ENCODE measurements at regions of chr2 and their contacts with region 1.

Region 1: DNA sequence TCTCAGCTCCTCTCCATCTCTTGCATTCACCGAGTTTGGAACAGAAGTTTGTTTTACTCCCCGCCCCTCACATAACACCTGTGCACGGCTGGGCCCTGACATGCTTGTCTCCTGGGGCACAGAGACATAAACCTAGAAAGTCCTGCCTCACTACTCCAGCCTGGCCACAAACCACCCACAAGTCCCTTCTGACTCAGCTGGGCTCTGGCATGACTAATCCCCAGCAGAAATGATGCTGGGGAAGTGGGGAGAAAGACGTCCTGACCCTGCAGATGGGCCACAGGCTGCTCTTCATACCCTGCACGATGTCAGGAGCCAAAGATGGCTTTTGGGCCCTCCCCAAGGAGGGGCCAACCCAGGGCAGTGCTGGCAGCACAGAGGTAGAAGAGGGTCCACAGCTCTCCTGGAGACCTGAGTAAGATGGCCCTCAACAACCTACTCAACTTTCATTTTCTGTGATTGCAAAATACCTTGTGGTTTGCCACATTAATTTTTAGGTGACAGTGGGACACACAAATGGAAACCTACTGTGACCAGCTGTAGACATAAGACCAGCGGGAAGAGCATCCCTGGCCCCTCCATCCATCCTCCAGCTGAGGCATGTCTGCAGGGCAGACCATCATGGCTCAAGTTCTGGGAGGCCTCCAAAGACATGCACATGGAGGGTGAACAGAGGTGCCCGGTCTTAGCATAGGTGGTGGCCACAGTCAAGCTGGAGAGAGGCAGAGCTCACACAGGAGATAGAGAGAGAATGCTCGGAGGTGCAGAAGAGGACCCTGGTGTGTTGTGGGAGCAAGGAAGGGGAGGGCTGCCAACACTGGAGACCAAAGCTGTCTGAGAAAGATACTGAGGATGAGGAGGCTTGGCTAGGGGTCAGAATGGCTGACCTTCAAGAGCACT is 40.0 kb downstream of the DNMT3A start:
- DNase-seq: no peak
- ATAC-seq: peak; percentile 37 to 50; a peak in 3 of 6 replicates
- H3K4me3 ChIP-seq: no peak overlapping the region
- H3K27ac ChIP-seq: no peak overlapping the region
- H3K4me1 ChIP-seq: no peaks in the 10 kb centered on the region; the same call in 2 of the 3 replicates
- CTCF ChIP-seq: no peak
- EP300 ChIP-seq: no peak
- POLR2A ChIP-seq: no peak
- RAD21 ChIP-seq: no peak

Region 2: DNA sequence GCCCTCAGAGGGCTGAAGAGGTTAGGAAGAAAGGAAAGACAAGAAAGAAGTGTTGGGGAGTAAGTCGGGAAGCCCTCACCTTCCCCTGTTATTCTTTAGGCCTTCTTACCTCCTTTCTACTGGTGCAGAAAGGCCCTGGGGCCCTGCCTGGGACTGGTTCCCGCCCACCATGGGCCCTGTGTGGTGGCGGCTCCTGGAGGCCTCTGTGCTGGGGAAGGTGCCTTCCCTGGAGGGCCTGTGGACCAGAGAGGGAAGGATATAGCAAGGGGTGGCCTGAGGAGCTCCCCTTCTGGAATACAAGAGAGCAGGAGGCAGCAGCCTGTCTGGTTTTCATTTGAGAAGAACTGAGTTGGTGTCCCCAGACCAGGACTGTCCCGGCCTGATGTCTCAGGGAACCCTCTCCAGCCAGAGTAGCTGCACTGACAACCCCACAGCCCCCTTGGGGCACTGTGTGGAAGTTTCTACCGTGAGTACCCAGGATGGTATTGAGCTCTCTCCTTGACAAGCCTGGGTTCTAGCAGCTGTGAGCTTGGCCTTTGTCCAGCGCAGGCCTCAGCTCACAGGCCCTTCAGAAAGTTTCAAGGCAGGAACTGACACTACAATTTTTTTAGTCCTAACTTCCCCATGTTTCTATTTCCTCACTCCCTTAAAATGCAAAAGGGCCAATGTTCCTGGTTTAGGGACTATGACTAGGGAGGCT is 212.7 kb before region 1 on chr2:
- CTCF ChIA-PET with region 1: no interaction called
- POLR2A ChIA-PET with region 1: no interaction called
- DNase-seq: no peak
- ATAC-seq: peak; percentile 22 to 61; a peak in 4 of 6 replicates
- H3K4me3 ChIP-seq: no peak overlapping the region
- H3K27ac ChIP-seq: no peak overlapping the region
- H3K4me1 ChIP-seq: no peaks in the 10 kb centered on the region
- CTCF ChIP-seq: no peak
- EP300 ChIP-seq: no peak
- POLR2A ChIP-seq: no peak
- RAD21 ChIP-seq: no peak

Region 3: DNA sequence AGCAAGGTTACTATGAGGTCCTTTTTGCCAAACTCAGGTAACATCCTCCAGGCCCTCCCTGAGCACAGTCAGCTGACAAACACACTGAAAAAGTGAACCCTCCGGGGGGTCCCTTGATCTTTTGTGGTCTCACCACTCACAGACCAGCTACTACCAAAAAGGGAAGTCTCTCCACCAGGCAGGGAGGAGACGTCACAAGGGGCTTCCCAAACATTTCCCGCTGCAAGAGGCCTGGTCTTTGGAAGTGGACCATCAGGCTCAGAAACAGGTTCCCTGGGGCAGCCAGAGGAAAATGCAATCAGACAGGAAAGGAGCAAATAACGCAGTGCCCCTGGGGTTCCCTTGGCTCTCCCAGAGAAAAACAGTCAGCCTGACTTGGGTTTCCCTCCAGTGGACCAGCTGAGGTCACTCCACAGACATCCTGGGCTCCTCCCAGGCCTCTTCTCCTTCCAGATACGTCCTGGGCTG is 94.6 kb before region 1 on chr2:
- CTCF ChIA-PET with region 1: no interaction called
- POLR2A ChIA-PET with region 1: no interaction called
- DNase-seq: no peak
- ATAC-seq: no peak
- H3K4me3 ChIP-seq: no peak overlapping the region
- H3K27ac ChIP-seq: no peak overlapping the region
- H3K4me1 ChIP-seq: no peaks in the 10 kb centered on the region
- CTCF ChIP-seq: no peak
- EP300 ChIP-seq: no peak
- POLR2A ChIP-seq: no peak
- RAD21 ChIP-seq: no peak

Region 4: GRCh38 chr2:25314514-25315315 is 13.0 kb after region 1 on chr2:
- CTCF ChIA-PET with region 1: interaction called, 10 read pairs
- POLR2A ChIA-PET with region 1: no interaction called
- DNase-seq: no peak
- ATAC-seq: peak in 1 of 2 experiments; percentile 35; a peak in 3 of 6 replicates
- H3K4me3 ChIP-seq: no peak overlapping the region
- H3K27ac ChIP-seq: peak overlapping the region in 1 of 2 experiments; percentile 65; a peak in 3 of 6 replicates
- H3K4me1 ChIP-seq: peaks cover 6% of the 10 kb centered on the region; the same call in 1 of the 3 replicates
- CTCF ChIP-seq: no peak
- EP300 ChIP-seq: no peak
- POLR2A ChIP-seq: no peak
- RAD21 ChIP-seq: no peak

Measured in A549 (cell line).